Activated T-helper 1 cell treated with anti-CD3 and anti-CD28 coated beads, Interleukin-12 subunit alpha, Interleukin-12 subunit beta, Interleukin-2, Interleukin-4 antibody, amounts not matched to agents 30 ng/mL and 10 ng/mL and 1 ng/mL, durations not matched to agents 14 hours and 24 hours and 36 hours (primary cell): ENCODE measurements at regions of chr5 and their contacts with region 1.

Region 1: GRCh38 chr5:134527146-134527960 is 1.9 kb downstream of the JADE2 start:
- DNase-seq: peak; percentile 63
- H3K4me3 Mint-ChIP-seq: peak overlapping the region; percentile 99
- H3K27ac Mint-ChIP-seq: peak overlapping the region; percentile 95
- H3K4me1 Mint-ChIP-seq: peaks cover 38% of the 10 kb centered on the region
- H3K27me3 Mint-ChIP-seq: peaks cover 2% of the 10 kb centered on the region

Region 2: DNA sequence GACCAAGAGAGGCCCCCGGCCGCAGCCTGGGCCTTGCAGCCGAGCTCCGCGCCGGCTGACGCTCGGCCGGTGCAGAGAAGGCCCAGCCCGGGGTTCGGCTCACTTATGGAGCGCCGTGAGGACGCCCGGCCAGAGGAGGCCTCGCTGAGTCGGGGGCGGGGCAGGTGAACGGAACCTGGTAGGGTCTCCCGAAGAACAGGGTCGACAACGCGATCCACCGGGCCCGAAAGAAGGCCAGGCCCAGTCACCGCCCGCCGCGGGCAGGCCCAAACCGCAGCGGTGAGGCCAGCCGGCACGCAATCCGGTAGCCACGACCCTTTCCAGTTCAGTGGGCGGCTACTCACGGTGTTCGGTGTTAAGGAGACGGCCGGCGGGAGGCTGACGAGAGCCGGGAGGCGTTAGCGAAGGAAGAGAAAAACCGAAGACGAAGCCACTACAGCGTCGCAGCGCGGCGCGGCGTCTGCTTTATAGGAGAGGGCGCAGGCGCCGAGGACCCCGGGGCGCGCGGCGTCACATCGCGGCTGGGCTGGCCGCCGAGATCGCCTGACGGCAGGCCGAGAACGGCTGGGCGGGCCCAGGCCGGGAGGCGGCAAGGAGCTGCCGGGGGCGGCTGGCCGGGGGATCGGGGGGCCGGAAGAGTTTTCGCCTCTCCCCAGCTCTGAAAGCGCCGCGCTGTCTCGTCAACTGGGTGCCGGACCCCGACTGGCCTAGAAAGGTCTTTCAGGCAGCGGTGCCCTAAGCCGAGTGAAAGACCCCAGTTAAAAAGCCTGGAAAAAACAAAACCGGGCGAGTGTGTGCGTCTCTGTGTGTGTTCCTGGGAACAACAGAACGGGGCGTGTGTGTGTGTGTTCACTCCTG is 350.6 kb before region 1 on chr5 and contains the start of gene SKP1:
- intact Hi-C with region 1: loop called (anchors 1 kb)
- DNase-seq: peak; percentile 85
- H3K4me3 Mint-ChIP-seq: peak within 1 kb of the TSS; percentile 96
- H3K27ac Mint-ChIP-seq: peak within 1 kb of the TSS; percentile 97
- H3K4me1 Mint-ChIP-seq: peaks cover 28% of the 10 kb centered on the region
- H3K27me3 Mint-ChIP-seq: peaks cover 6% of the 10 kb centered on the region
- total RNA-seq, gene SKP1: 259 and 265 TPM in 2 replicates

Region 3: DNA sequence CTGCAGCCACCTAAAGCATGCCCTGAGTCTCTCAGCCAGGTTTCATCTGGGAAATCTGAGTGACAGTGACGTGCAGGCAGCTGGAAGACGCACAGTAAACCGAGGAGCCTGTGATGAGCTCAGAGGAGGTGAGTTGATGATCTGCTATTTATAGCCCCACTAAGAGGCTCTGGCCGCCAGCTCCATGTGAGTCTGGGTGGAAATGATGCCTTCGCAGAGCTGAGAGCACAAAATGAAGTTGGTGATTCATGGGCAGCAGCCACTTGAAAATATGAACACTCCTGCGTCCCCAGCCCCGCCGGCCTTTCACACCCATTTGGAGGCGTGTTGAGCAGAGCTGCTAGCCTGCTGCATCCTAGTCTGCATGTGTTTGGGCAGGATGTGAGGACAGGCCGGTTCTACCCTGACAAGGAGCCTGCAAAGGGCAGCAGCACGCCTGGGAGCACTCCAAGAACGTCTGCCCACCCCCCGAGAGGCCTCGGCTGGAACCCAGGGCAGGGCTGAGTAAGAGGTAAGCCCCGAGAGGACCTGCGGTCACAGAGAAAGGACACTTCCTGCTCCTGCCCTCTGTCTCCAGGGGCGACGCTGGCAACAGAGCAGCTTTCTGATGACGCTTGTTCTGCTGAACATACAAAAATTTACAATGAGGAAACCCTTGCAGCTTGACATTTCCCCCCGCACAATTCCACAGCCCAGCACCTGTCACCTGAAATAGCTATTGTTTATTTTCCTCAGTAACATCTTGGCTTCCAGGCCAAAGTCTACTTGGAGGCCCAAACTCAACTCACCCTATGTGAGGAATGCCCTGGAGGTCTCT is 90.6 kb before region 1 on chr5:
- intact Hi-C with region 1: loop called (anchors 1 kb)
- DNase-seq: peak; percentile 51
- H3K4me3 Mint-ChIP-seq: peak overlapping the region; percentile 10
- H3K27ac Mint-ChIP-seq: peak overlapping the region; percentile 77
- H3K4me1 Mint-ChIP-seq: peaks cover 26% of the 10 kb centered on the region
- H3K27me3 Mint-ChIP-seq: peaks cover 2% of the 10 kb centered on the region

Region 4: GRCh38 chr5:134511788-134512650 is 15.3 kb before region 1 on chr5:
- intact Hi-C with region 1: loop called (anchors 2 kb)
- DNase-seq: no peak
- H3K4me3 Mint-ChIP-seq: no peak overlapping the region
- H3K27ac Mint-ChIP-seq: peak overlapping the region; percentile 40
- H3K4me1 Mint-ChIP-seq: peaks cover 39% of the 10 kb centered on the region
- H3K27me3 Mint-ChIP-seq: no peaks in the 10 kb centered on the region

Region 5: GRCh38 chr5:134577796-134578363 is 50.5 kb after region 1 on chr5:
- intact Hi-C with region 1: loop called (anchors 1 kb)
- DNase-seq: peak; percentile 62
- H3K4me3 Mint-ChIP-seq: no peak overlapping the region
- H3K27ac Mint-ChIP-seq: peak overlapping the region; percentile 6
- H3K4me1 Mint-ChIP-seq: no peaks in the 10 kb centered on the region
- H3K27me3 Mint-ChIP-seq: no peaks in the 10 kb centered on the region

Region 6: GRCh38 chr5:134626369-134627014 is 99.1 kb after region 1 on chr5:
- intact Hi-C with region 1: no loop called
- DNase-seq: no peak
- H3K4me3 Mint-ChIP-seq: no peak overlapping the region
- H3K27ac Mint-ChIP-seq: peak overlapping the region; percentile 27
- H3K4me1 Mint-ChIP-seq: peaks cover 21% of the 10 kb centered on the region
- H3K27me3 Mint-ChIP-seq: no peaks in the 10 kb centered on the region

Region 7: DNA sequence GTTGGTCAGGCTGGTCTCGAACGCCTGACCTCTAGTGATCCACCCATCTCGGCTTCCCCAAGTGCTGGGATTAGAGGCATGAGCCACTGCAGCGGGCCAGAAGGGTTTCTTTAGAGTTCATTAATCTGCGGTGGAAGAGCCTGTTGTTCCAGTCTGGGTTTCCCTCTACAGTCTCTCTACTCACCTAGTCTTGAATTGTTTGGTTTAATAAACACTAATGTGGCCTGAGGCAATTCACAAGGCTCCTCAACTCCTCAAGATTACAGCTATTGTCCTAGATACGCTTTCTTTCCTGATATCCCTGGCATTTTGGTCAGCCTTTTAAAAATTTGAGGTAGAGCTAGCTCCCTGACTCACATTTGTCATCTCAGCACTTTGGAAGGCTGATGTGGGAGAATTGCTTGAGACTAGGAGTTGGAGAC is 109.8 kb after region 1 on chr5:
- intact Hi-C with region 1: no loop called
- DNase-seq: no peak
- H3K4me3 Mint-ChIP-seq: no peak overlapping the region
- H3K27ac Mint-ChIP-seq: no peak overlapping the region
- H3K4me1 Mint-ChIP-seq: peaks cover 7% of the 10 kb centered on the region
- H3K27me3 Mint-ChIP-seq: no peaks in the 10 kb centered on the region

Region 8: GRCh38 chr5:134738133-134738962 is 211.0 kb after region 1 on chr5 and contains the start of gene CAMLG:
- intact Hi-C with region 1: loop called (anchors 2 kb)
- DNase-seq: peak; percentile 98
- H3K4me3 Mint-ChIP-seq: peak within 1 kb of the TSS; percentile 94
- H3K27ac Mint-ChIP-seq: peak within 1 kb of the TSS; percentile 90
- H3K4me1 Mint-ChIP-seq: peaks cover 32% of the 10 kb centered on the region
- H3K27me3 Mint-ChIP-seq: no peaks in the 10 kb centered on the region
- total RNA-seq, gene CAMLG: 25.9 and 26.9 TPM in 2 replicates